ENCODE measurements at regions of chr3 and their contacts with region 1.

Region 1: DNA sequence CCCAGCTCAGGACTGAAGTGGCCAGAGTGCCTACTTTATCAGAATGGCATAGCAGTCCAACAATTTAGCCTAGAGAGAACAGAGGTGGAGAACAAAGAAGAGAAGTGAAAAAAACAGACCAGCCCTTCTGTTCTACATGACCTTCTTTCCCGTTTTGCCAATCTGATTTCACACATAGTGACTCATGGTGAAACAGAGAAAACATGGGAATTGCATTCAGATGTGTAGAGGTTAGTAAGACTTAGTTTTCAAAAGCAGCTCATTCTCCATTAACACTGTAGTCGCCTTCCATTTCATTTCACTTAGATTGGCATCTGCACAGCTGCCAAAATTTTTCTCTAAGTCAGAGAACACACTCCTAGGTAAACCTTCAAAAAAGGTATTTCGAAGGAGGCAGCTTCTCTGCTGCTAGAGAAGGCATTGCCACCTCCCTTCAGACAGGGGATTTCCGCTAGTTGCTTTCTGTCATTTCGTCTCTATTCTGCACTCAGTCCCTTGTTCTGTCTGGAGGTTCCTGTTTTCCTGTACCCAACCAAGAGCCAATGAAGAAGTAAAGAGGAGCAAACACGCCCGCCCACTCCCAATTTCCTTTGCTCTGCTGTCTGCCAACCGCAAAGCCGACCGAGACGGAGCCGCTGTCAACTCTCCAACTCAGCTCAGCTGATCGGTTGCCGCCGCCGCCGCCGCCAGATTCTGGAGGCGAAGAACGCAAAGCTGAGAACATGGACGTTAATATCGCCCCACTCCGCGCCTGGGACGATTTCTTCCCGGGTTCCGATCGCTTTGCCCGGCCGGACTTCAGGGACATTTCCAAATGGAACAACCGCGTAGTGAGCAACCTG is at the start of gene ARL6IP5:
- DNase-seq: peak; percentile 95 to 99 (median 96)

Region 2: GRCh38 chr3:69013253-69014021 is 71.1 kb before region 1 on chr3 and contains the start of gene EOGT:
- intact Hi-C with region 1: loop called (anchors 5 kb)
- DNase-seq: peak; percentile 76 to 97 (median 82)

Region 3: DNA sequence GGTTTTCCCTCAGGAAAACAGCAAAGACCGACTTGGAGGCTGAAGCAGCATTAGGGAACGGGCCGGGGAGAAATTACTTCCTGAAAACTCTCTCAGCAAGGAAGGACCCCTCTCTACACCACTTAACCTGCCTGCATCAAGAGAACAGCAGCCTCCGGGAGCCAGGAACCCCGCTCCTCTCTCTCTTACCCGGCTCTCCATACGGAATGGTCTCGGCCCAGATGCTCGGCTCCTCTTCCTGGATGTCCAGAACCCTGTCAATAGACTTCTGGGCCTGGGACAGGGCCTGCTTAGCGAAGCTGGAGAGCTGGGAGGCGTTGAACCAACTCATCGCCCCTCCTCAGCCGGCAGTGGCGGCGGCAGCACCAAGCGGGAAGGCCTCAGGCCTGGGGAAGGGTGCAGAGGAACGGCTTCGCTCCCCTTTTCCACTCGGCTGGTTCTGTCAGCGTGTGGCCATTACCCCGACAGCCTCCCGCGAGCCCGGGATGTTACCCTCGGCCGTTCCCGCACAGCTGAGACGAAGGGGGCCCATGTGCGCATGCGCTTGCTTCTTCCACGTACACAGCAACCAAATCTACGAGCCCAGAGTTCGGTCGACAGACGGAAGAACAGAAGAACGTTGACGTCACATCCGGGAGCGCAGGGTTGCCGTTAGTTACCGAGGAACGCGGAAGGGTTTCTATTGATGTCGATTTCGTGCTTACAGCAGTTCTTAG is 32.6 kb before region 1 on chr3 and contains the start of gene TMF1:
- intact Hi-C with region 1: loop called (anchors 2 kb)
- DNase-seq: peak; percentile 94 to 99 (median 96)

Measured in posterior cingulate gyrus (tissue), 11 donors.